ENCODE measurements at regions of chr11 and their contacts with region 1.

Region 1: DNA sequence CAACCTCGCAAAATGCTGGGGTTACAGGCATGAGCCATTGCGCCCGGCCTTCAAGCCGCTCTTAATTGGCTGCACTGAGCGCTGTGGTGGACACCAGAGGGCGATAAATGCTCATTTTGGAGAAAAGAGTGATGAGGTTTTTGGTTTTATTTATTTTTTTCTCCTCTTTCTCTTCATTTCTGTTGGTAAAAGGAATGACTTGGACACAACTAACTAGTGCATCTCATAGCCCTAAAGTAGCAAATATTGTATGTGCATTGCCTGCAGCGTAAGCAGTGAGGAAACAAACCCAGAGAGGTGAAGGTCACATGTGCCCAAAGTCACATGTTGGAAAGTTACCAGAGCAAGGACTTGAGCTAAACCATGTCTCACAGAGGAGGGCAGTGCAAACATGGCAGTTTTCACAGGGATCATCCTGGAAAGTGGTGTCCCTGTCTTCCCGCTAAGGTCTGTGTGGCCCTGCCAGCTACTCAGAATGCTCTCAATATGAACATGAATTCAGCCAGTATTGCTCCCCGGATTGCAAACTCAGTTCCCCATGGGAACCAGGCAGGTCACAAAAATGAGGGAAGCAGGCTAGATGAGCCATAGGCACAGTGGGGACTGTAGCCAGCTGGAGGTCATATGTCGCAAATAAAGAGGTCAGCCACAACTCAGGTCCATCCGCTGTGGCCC is 8.6 kb upstream of the CD82 start:
- DNase-seq: no peak
- H3K4me3 ChIP-seq: no peak overlapping the region
- H3K27ac ChIP-seq: no peak overlapping the region
- H3K27me3 ChIP-seq: peaks cover 3% of the 10 kb centered on the region
- CTCF ChIP-seq: peak; percentile 86

Region 2: GRCh38 chr11:44574610-44575287 is 17.9 kb after region 1 on chr11:
- CTCF ChIA-PET with region 1: interaction called, 11 read pairs
- POLR2A ChIA-PET with region 1: no interaction called
- DNase-seq: peak; percentile 84
- H3K4me3 ChIP-seq: no peak overlapping the region
- H3K27ac ChIP-seq: peak overlapping the region; percentile 98
- H3K27me3 ChIP-seq: no peaks in the 10 kb centered on the region
- CTCF ChIP-seq: no peak

Region 3: GRCh38 chr11:44611687-44612434 is 55.0 kb after region 1 on chr11:
- CTCF ChIA-PET with region 1: interaction called, 318 read pairs
- POLR2A ChIA-PET with region 1: interaction called, 4 read pairs
- DNase-seq: no peak
- H3K4me3 ChIP-seq: no peak overlapping the region
- H3K27ac ChIP-seq: peak overlapping the region; percentile 21
- H3K27me3 ChIP-seq: no peaks in the 10 kb centered on the region
- CTCF ChIP-seq: no peak

Region 4: GRCh38 chr11:44627911-44628729 is 71.2 kb after region 1 on chr11:
- CTCF ChIA-PET with region 1: interaction called, 318 read pairs
- POLR2A ChIA-PET with region 1: interaction called, 10 read pairs
- DNase-seq: no peak
- H3K4me3 ChIP-seq: no peak overlapping the region
- H3K27ac ChIP-seq: no peak overlapping the region
- H3K27me3 ChIP-seq: peaks cover 2% of the 10 kb centered on the region
- CTCF ChIP-seq: no peak